Cardiac septum (tissue), 1 donor: ENCODE measurements at regions of chr17 and their contacts with region 1.

Region 1: DNA sequence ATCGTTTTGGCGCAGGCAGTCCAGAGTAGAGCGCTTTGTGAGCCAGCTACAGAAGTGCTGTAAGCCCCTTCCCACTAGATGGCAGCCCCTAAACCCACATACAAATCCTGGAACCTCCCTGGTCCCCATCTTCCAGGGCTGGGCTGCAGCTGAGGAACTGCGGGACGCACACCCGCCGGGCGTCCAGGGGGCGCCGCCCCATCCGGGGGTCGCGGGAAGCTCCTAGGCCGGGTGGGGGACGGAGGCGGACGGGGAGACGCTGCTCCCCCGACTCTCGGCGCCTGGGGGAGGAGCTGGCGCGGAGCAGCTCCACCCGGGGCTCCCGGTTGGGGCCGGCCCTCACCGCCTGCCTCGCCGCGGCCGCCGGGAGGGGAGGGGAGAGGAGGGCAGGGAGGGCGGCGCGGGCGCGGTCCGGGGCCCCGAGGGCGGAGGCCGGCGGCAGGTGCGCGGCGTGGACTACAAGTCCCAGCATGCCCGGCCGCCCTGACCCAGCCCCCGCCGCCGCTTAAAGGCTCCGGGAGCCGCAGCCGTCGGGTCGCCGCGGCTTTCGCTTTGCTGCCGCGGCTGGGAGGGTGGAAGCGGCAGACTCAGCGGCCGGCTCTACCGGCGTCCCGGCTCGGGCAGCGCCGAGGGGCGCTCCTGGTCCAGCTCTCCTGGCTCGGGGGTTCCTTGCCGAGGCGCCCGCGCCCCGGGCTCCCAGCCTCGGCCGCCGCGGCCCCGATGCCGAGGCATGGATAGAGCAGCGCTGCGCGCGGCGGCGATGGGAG is at the start of gene KSR1:
- DNase-seq: peak; percentile 91
- total RNA-seq, gene KSR1: 13.6 TPM

Region 2: DNA sequence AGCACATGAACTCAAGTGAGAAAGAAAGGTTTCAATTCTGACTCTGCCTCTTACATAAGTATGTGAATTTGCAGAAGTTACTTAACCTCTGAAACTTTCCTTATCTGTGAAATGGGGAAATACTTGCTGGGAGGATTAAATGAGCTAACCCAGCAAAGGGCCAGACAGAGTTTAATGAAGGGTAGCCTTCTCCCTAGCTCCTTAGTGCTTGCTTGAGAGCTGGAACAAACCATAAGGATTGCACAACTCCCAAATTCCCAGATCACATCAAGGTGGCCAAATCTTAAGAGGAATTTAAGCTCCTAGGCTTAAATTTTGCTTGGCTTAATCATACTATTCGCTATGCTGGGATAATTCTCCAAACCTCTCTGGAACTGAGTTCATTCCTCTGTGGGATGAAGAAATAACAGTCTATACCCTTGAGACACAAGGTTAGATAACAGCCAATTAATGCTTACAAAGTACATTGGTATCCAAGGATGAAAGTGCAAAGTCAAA is 174.0 kb before region 1 on chr17:
- intact Hi-C with region 1: no loop called
- DNase-seq: no peak

Region 3: DNA sequence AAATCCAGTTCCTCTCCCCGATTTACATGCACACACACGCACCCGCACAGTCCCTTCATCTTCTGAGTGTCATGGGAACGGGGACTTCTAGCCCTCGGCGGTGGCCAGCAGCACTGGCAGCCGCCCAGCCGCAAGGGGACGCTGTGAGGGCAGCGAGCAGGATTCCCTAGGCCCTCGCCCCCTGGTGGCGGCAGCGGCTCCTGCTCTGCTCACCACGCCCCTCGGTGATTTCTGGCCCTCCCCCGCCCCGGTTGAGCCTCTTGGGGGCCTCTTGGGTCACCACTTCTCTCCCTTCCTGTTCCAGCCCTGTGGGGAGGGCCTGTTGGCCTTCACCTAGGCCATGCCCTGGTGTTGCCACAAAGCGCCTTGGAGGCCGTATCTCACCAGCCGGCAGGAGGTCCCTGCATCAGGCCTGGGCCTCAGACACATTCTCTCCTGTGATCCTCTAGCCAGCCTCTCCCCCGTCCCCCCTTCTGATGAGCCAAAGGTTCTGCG is 75.0 kb before region 1 on chr17:
- intact Hi-C with region 1: loop called (anchors 10 kb)
- DNase-seq: peak; percentile 86

Region 4: GRCh38 chr17:27559506-27560481 is 103.7 kb after region 1 on chr17:
- intact Hi-C with region 1: loop called (anchors 5 kb)
- DNase-seq: no peak

Region 5: DNA sequence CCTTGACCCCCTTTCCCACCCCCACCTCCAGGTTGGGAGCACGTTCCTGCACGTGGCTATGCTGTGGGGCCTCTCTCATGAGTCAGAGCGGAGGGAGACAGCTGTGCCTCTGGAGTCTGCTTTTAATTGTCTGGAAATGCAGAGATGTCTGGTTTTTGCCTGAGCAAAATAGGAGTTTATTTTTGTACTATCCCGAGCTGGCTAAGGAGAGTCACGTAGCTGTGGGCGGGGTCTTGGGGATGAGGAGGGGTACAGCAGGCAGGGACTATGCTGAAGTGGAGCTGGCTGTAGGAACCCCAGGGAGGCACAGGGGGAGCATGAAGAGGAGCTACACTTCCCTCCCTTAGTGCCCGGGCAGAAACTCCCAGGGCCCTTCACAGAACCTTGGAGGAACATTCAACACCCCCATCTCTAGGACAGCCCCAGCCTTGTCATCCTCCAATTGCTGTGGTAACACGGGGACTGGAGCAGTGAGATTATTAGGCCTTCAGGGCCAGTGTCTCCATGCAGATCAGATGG is 130.2 kb after region 1 on chr17:
- intact Hi-C with region 1: no loop called
- DNase-seq: no peak

Region 6: DNA sequence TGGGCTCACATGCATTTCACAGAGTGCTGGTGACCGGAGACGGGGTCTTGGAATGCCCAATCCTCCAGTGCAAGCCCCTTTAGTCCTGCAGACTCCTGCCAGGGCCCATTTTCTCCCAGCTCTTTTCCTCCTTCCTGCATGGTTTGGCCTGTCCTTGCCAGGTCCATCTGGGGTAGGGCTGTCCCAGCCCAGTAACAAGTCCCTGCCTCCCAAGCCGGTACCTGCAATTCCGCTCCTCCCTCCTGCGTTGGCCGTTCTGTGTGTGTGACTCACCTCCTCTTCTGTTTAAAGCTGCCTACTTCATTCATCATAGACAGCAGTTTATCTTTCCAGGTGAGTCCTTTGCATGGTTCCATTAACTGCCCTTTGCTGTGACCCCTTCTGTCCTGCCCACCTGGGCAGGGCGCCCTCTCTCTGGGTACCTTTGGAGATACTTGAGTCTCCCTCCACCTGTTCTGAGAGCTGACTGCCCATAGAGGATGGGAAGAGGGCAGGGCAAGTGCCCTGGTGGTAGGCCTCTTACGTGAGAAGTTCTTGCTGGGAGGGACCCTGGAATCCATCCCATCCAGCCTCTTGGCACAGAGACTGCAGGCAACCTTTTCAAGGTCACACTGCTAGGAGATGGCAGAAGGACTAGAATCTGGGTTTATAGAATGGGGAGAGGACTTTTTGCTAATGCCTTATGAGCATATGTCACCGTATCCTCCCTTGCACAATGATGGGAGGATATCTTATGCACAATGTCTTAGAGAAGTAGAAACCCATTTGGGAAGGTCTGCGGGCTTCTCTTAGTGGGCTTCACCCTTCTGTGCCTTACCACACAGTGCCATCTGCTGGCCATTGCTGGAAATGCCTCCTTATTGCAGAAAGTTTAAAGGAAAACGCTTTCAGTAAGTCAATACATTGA is 145.2 kb after region 1 on chr17:
- intact Hi-C with region 1: loop called (anchors 1 kb)
- DNase-seq: peak; percentile 85